Activated naive CD4-positive, alpha-beta T cell treated with anti-CD3 and anti-CD28 coated beads, Interleukin-2, amount 10 ng/mL, durations not matched to agents 7 days and 5 days (primary cell): ENCODE measurements at regions of chr3 and their contacts with region 1.

Region 1: DNA sequence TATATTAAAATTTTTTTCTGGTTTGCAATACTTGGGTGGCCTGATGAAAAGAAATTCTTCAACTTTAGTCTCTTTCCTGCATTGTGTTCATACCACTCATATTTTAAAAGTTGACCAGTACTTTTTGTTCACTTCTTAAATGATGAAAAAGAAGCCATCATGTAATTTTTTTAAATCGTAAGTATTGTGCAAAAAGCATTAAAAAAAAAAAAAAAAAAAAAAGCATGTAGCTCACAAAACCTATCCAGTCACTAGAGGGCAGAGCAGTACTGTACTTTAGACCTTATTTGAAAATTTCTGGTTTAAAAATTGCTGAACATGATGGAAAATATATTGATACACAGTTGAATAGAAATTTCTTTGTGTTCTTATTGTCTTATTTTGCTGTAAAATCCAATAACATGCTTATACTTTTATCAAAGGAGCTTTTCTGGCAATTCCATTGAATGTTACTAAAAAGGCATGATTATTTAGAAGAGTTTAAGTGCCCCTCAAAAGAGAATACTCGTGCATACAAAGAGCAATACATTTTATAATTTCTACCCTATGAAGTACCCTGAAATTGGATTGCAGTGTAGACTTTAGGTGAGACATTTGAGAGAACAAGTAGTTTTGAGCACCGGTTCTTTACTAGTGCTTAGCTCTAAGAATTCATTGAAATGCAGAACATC is 137.7 kb downstream of the BBX start:
- DNase-seq: no peak
- H3K4me3 Mint-ChIP-seq: no peak overlapping the region
- H3K27ac Mint-ChIP-seq: no peak overlapping the region
- H3K4me1 Mint-ChIP-seq: peaks cover 15% of the 10 kb centered on the region
- H3K27me3 Mint-ChIP-seq: no peaks in the 10 kb centered on the region

Region 2: GRCh38 chr3:107531917-107532469 is 128.4 kb before region 1 on chr3:
- CTCF ChIA-PET with region 1: no interaction called
- DNase-seq: no peak
- H3K4me3 Mint-ChIP-seq: no peak overlapping the region
- H3K27ac Mint-ChIP-seq: no peak overlapping the region
- H3K4me1 Mint-ChIP-seq: peaks cover under 1% of the 10 kb centered on the region
- H3K27me3 Mint-ChIP-seq: no peaks in the 10 kb centered on the region

Region 3: GRCh38 chr3:107574650-107575049 is 85.8 kb before region 1 on chr3:
- CTCF ChIA-PET with region 1: interaction called, 13 read pairs
- DNase-seq: no peak
- H3K4me3 Mint-ChIP-seq: no peak overlapping the region
- H3K27ac Mint-ChIP-seq: no peak overlapping the region
- H3K4me1 Mint-ChIP-seq: peaks cover 5% of the 10 kb centered on the region
- H3K27me3 Mint-ChIP-seq: no peaks in the 10 kb centered on the region

Region 4: DNA sequence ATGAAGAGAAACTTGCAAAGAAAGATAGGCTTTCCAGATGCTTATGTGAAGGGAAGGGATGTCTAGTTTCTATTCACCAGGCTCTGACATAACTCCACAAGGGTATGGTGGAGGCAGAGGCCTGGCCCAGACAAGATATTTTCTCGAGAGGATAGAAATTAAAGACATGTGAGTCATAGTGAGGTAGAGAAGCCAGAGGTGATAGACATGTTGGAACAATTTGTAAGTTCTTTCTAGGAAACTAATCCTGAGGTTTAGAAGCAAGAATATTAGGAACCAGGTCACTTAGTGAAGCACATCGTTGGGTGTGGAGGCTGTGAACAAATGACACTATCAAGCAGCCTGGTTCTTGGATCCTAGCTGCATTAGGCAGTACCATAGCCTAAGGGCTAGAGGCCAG is 39.2 kb after region 1 on chr3:
- CTCF ChIA-PET with region 1: no interaction called
- DNase-seq: no peak
- H3K4me3 Mint-ChIP-seq: no peak overlapping the region
- H3K27ac Mint-ChIP-seq: no peak overlapping the region
- H3K4me1 Mint-ChIP-seq: peaks cover 3% of the 10 kb centered on the region
- H3K27me3 Mint-ChIP-seq: no peaks in the 10 kb centered on the region